Sigmoid colon (tissue), 7 donors: ENCODE measurements at regions of chr14 and their contacts with region 1.

Region 1: GRCh38 chr14:88168498-88169165 is 154.4 kb downstream of the KCNK10 start:
- DNase-seq: no peak
- H3K4me3 ChIP-seq: no peak overlapping the region
- H3K27ac ChIP-seq: no peak overlapping the region
- H3K4me1 ChIP-seq: no peaks in the 10 kb centered on the region
- H3K27me3 ChIP-seq: no peaks in the 10 kb centered on the region
- CTCF ChIP-seq: peak in 3 of 4 experiments; percentile 18 to 45 (median 19)
- EP300 ChIP-seq: no peak
- POLR2A ChIP-seq: no peak

Region 2: DNA sequence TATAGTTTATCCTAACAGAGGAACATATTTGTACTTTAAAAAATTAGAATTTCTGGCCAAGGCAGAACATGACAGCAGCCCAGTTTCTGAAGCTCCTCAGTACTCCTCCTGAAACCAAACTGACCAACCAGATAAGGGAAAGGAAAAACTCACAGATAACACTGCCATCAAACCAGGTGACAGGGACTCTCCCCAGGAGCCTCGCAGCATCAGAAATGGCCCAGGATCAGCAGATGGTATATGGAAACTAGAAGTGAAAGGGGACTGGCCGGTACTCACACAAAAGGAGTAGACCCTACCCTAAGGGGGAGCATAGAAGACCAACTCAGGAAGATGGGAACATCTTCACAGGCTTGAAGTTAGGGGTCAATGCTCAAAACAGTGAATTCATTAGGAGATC is 197.6 kb before region 1 on chr14:
- intact Hi-C with region 1: no loop called
- DNase-seq: no peak
- H3K4me3 ChIP-seq: no peak overlapping the region
- H3K27ac ChIP-seq: no peak overlapping the region
- H3K4me1 ChIP-seq: no peaks in the 10 kb centered on the region
- H3K27me3 ChIP-seq: no peaks in the 10 kb centered on the region
- CTCF ChIP-seq: no peak
- EP300 ChIP-seq: no peak
- POLR2A ChIP-seq: no peak

Region 3: GRCh38 chr14:88013750-88014349 is 154.8 kb before region 1 on chr14:
- intact Hi-C with region 1: loop called (anchors 5 kb)
- DNase-seq: peak; percentile 78
- H3K4me3 ChIP-seq: no peak overlapping the region
- H3K27ac ChIP-seq: no peak overlapping the region
- H3K4me1 ChIP-seq: peaks cover 0 to 4% (median 0%) of the 10 kb centered on the region in 4 donors
- H3K27me3 ChIP-seq: no peaks in the 10 kb centered on the region
- CTCF ChIP-seq: peak in 3 of 4 experiments; percentile 70 to 82 (median 81)
- EP300 ChIP-seq: no peak
- POLR2A ChIP-seq: no peak